ENCODE measurements at regions of chr10 and their contacts with region 1.

Region 1: GRCh38 chr10:62816331-62817120 is at the start of gene EGR2:
- DNase-seq: peak; percentile 86
- ATAC-seq: peak; percentile 84
- H3K4me3 ChIP-seq: peak within 1 kb of the TSS; percentile 61 to 75 (median 65)
- H3K27ac ChIP-seq: no peak within 1 kb of the TSS
- H3K4me1 ChIP-seq: peaks cover 23% of the 10 kb centered on the region
- H3K27me3 ChIP-seq: peaks cover 7 to 23% of the 10 kb centered on the region in 2 experiments; a peak in 4 of 5 replicates
- CTCF ChIP-seq: 0 out of 2 replicates have a peak, but pooled peaks have one; percentile 8
- EP300 ChIP-seq: no peak
- POLR2A ChIP-seq: no peak
- RAD21 ChIP-seq: no peak
- total RNA-seq, gene EGR2: 0.11 TPM in 1 of 2 replicates, not detected in the other

Region 2: GRCh38 chr10:62594093-62594520 is 222.4 kb before region 1 on chr10:
- CTCF ChIA-PET with region 1: interaction called, 8 read pairs
- POLR2A ChIA-PET with region 1: no interaction called
- in situ Hi-C with region 1: no loop called
- intact Hi-C with region 1: loop called (anchors 1 kb)
- DNase-seq: peak; percentile 27
- ATAC-seq: peak; percentile 94
- H3K4me3 ChIP-seq: no peak overlapping the region
- H3K27ac ChIP-seq: no peak overlapping the region
- H3K4me1 ChIP-seq: no peaks in the 10 kb centered on the region
- H3K27me3 ChIP-seq: no peaks in the 10 kb centered on the region
- CTCF ChIP-seq: peak; percentile 85
- EP300 ChIP-seq: no peak
- POLR2A ChIP-seq: no peak
- RAD21 ChIP-seq: peak; percentile 69

Region 3: GRCh38 chr10:62610649-62611229 is 205.8 kb before region 1 on chr10:
- CTCF ChIA-PET with region 1: interaction called, 11 read pairs
- POLR2A ChIA-PET with region 1: no interaction called
- in situ Hi-C with region 1: loop called (anchors 5 kb)
- intact Hi-C with region 1: loop called (anchors 1 kb)
- DNase-seq: peak; percentile 35
- ATAC-seq: peak; percentile 95
- H3K4me3 ChIP-seq: no peak overlapping the region
- H3K27ac ChIP-seq: no peak overlapping the region
- H3K4me1 ChIP-seq: no peaks in the 10 kb centered on the region
- H3K27me3 ChIP-seq: no peaks in the 10 kb centered on the region
- CTCF ChIP-seq: peak; percentile 88
- EP300 ChIP-seq: no peak
- POLR2A ChIP-seq: no peak
- RAD21 ChIP-seq: peak; percentile 80

Region 4: DNA sequence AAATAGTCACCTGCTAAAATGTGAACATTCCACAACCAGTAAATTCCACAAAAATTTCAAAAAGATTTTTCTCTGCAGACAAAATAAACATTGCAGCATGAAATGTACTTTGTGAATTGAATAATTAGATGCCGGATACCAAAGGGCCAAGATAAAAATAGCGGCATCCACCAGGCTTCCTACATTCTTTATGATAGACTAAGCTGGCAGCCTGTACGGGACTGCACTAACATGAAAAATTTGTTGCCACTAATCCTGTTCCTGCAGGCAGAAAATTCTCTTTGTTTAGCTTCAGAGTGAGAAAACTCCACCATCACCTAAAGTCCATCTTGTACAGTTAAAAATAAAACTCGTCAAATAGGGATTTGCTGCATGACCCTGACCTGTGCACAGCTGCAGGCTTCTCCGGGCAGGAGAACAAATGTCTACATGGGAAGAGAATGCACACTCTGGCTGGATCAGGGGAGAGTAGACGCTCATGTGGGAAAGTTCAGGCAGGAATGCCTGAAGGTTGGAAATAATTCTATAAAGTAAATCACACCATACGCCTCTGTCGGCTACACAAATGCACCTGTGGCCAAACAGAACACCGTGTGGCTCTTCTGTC is 27.6 kb before region 1 on chr10:
- CTCF ChIA-PET with region 1: no interaction called
- POLR2A ChIA-PET with region 1: no interaction called
- in situ Hi-C with region 1: no loop called
- intact Hi-C with region 1: no loop called
- DNase-seq: peak; percentile 26
- ATAC-seq: peak; percentile 98
- H3K4me3 ChIP-seq: no peak overlapping the region
- H3K27ac ChIP-seq: no peak overlapping the region
- H3K4me1 ChIP-seq: peaks cover 18% of the 10 kb centered on the region
- H3K27me3 ChIP-seq: no peaks in the 10 kb centered on the region
- CTCF ChIP-seq: no peak
- EP300 ChIP-seq: no peak
- POLR2A ChIP-seq: no peak
- RAD21 ChIP-seq: no peak

Region 5: DNA sequence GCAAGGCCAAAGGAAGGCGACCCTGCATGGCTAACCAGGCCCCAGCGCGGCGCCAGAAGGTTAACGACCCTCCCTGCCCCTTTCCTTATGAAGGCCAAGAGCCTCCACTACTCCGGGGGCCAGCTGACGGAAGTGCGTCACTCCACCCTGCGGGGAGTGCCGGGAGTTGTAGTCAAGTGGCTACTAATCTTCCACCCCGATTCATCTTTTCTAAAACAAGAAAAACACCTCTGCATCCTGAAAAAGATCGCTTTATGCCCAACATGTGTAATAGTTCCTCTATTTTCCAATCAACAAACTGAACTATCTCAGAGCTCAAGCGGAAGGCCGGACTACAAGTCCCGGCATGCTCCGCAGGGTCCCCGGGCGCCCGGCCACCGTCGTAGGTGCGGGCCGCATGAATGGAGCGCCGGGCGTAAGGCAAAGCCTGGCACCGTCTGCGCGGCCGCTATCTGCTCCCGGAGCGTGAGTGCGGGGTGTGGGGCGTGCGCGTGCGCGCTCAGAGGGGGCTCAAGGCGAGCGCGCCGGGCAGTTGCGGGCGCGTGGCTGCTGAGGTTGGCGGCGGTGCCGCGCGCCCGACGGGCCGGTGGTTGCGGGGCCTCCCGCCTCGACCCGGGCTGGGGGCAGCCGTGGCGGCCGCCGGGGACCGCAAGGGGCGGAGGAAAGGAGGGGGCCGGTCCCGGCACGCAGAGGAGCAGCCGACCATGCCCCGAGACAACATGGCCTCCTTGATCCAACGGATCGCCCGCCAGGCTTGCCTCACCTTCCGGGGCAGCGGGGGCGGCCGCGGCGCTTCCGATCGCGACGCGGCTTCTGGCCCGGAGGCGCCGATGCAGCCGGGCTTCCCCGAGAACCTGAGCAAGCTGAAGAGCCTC is 11.9 kb before region 1 on chr10 and contains the start of gene ADO:
- CTCF ChIA-PET with region 1: no interaction called
- POLR2A ChIA-PET with region 1: interaction called, 13 read pairs
- in situ Hi-C with region 1: no loop called
- intact Hi-C with region 1: loop called (anchors 1 kb)
- DNase-seq: peak; percentile 73
- ATAC-seq: peak; percentile 92
- H3K4me3 ChIP-seq: peak within 1 kb of the TSS; percentile 60 to 100 (median 95)
- H3K27ac ChIP-seq: peak within 1 kb of the TSS; percentile 75
- H3K4me1 ChIP-seq: peaks cover 34% of the 10 kb centered on the region
- H3K27me3 ChIP-seq: no peaks in the 10 kb centered on the region
- CTCF ChIP-seq: no peak; the same call in 1 of the 2 replicates
- EP300 ChIP-seq: 0 out of 4 replicates have a peak, but pooled peaks of 1 of the 2 experiments have one; percentile 34
- POLR2A ChIP-seq: peak in 1 of 2 experiments; percentile 67; a peak in 3 of 4 replicates
- RAD21 ChIP-seq: peak; percentile 40; the same call in 1 of the 2 replicates
- total RNA-seq, gene ADO: 15.9 and 16.5 TPM in 2 replicates

Region 6: GRCh38 chr10:63133056-63133820 is 316.7 kb after region 1 on chr10 and contains the start of gene NRBF2:
- CTCF ChIA-PET with region 1: no interaction called
- POLR2A ChIA-PET with region 1: interaction called, 11 read pairs
- in situ Hi-C with region 1: no loop called
- intact Hi-C with region 1: loop called (anchors 1 kb)
- DNase-seq: peak; percentile 97
- ATAC-seq: peak; percentile 96
- H3K4me3 ChIP-seq: peak within 1 kb of the TSS; percentile 77 to 91 (median 88)
- H3K27ac ChIP-seq: peak within 1 kb of the TSS; percentile 92
- H3K4me1 ChIP-seq: peaks cover 44% of the 10 kb centered on the region
- H3K27me3 ChIP-seq: no peaks in the 10 kb centered on the region; a peak in 1 of 5 replicates
- CTCF ChIP-seq: peak; percentile 74
- EP300 ChIP-seq: no peak
- POLR2A ChIP-seq: peak; percentile 92 to 96
- RAD21 ChIP-seq: 0 out of 2 replicates have a peak, but pooled peaks have one; percentile 15
- total RNA-seq, gene NRBF2: 28.4 and 39.0 TPM in 2 replicates

Measured in HepG2 (cell line).